Heart left ventricle (tissue), 16 donors: ENCODE measurements at regions of chr20 and their contacts with region 1.

Region 1: GRCh38 chr20:12383821-12384220 is 466.1 kb downstream of the BTBD3 start:
- DNase-seq: no peak
- ATAC-seq: peak in 3 of 4 donors; percentile 37 to 74 (median 44)
- H3K4me3 ChIP-seq: no peak overlapping the region
- H3K27ac ChIP-seq: peak overlapping the region in 11 of 12 donors; percentile 4 to 69 (median 63)
- H3K4me1 ChIP-seq: peaks cover 0 to 25% (median 8%) of the 10 kb centered on the region in 12 donors
- H3K27me3 ChIP-seq: no peaks in the 10 kb centered on the region
- CTCF ChIP-seq: no peak
- POLR2A ChIP-seq: no peak

Region 2: GRCh38 chr20:11686820-11687543 is 696.8 kb before region 1 on chr20:
- intact Hi-C with region 1: loop called in 1 of 10 experiments (anchors 10 kb)
- DNase-seq: peak in 4 of 5 donors; percentile 15 to 59 (median 29)
- ATAC-seq: peak in 2 of 4 donors; percentile 38 to 67
- H3K4me3 ChIP-seq: peak overlapping the region in 10 of 12 donors; percentile 13 to 47 (median 44)
- H3K27ac ChIP-seq: no peak overlapping the region
- H3K4me1 ChIP-seq: peaks cover 0 to 13% (median 5%) of the 10 kb centered on the region in 12 donors
- H3K27me3 ChIP-seq: peaks cover 0 to 3% (median 0%) of the 10 kb centered on the region in 9 donors
- CTCF ChIP-seq: no peak
- POLR2A ChIP-seq: no peak

Region 3: DNA sequence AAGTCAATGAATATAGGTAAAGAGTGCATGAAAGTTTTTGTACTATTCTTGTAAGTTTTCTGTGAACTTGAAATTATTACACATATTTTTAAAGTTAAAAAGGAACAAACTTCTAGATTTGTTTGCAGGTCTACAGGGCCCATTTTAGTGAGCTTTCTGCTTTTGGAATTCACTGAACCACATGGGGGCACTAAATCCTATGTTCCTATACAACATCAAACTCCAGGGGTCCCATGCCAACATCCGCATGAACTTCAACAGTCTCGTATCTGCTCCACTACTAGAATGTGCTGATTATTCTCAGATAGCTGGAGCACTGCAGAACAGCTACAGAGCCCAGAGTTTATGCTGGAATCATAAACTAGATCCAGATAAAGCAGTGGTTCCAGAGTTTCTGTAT is 277.1 kb after region 1 on chr20:
- intact Hi-C with region 1: no loop called
- DNase-seq: peak in 1 of 5 donors; percentile 16
- ATAC-seq: no peak
- H3K4me3 ChIP-seq: no peak overlapping the region
- H3K27ac ChIP-seq: no peak overlapping the region
- H3K4me1 ChIP-seq: no peaks in the 10 kb centered on the region
- H3K27me3 ChIP-seq: no peaks in the 10 kb centered on the region
- CTCF ChIP-seq: peak in 2 of 12 donors; percentile 23 to 32
- POLR2A ChIP-seq: no peak